ENCODE measurements at regions of chr19 and their contacts with region 1.

Region 1: DNA sequence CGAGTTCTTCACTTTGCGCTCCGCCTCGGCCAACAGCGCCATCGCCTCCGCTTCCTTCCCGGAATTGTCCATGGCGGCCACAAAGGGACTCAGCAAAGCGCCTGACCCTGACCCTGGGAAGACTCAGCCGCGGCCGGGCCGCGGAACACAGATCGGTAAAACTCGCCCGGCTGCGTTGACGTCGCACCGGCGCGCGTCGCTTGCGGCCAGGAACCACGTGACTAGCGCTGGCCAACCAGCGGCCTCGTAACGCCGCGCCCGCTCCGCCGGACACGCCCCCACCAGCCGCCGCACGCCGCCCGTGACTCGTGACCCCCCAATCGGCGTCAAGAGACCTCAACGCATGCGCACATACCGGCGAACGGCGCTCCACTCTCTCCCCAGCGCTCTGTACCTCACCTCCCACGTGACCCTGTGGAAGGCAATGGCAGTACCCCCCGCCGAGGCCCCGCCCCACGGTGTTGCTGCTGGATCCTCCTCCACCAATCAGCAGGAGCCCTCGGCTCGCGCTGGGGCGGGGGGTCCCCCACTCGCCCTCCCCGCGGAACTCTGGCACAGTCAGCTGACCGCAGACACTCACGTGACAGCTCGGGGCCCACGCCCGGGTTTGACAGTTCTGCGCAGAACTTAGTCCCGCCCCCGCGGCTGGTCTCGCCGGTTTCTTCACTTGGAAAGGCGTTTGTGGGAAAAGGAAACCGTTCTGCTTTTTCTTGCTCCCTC is at the start of gene NAPA:
- DNase-seq: peak; percentile 100
- ATAC-seq: peak; percentile 92
- H3K4me3 ChIP-seq: peak within 1 kb of the TSS; percentile 97
- H3K4me3 Mint-ChIP-seq: peak within 1 kb of the TSS; percentile 99
- H3K27ac ChIP-seq: peak within 1 kb of the TSS; percentile 93 to 98
- H3K27ac Mint-ChIP-seq: peak within 1 kb of the TSS; percentile 96
- H3K4me1 ChIP-seq: peaks cover 77% of the 10 kb centered on the region
- H3K4me1 Mint-ChIP-seq: peaks cover 88% of the 10 kb centered on the region
- H3K27me3 ChIP-seq: no peaks in the 10 kb centered on the region
- H3K27me3 Mint-ChIP-seq: no peaks in the 10 kb centered on the region
- CTCF ChIP-seq: no peak
- total RNA-seq, gene NAPA: 135 to 145 TPM

Region 2: GRCh38 chr19:47447470-47448359 is 67.3 kb before region 1 on chr19:
- CTCF ChIA-PET with region 1: interaction called, 13 read pairs
- POLR2A ChIA-PET with region 1: no interaction called
- intact Hi-C with region 1: loop called in 1 of 2 experiments (anchors 2 kb)
- DNase-seq: peak in 12 of 14 experiments; percentile 23 to 81 (median 53)
- ATAC-seq: peak; percentile 64
- H3K4me3 ChIP-seq: peak overlapping the region; percentile 10
- H3K4me3 Mint-ChIP-seq: peak overlapping the region; percentile 79
- H3K27ac ChIP-seq: no peak overlapping the region
- H3K27ac Mint-ChIP-seq: no peak overlapping the region
- H3K4me1 ChIP-seq: peaks cover 51% of the 10 kb centered on the region
- H3K4me1 Mint-ChIP-seq: peaks cover 53% of the 10 kb centered on the region
- H3K27me3 ChIP-seq: peaks cover 23 to 31% of the 10 kb centered on the region in 2 experiments
- H3K27me3 Mint-ChIP-seq: peaks cover 71% of the 10 kb centered on the region
- CTCF ChIP-seq: no peak

Region 3: DNA sequence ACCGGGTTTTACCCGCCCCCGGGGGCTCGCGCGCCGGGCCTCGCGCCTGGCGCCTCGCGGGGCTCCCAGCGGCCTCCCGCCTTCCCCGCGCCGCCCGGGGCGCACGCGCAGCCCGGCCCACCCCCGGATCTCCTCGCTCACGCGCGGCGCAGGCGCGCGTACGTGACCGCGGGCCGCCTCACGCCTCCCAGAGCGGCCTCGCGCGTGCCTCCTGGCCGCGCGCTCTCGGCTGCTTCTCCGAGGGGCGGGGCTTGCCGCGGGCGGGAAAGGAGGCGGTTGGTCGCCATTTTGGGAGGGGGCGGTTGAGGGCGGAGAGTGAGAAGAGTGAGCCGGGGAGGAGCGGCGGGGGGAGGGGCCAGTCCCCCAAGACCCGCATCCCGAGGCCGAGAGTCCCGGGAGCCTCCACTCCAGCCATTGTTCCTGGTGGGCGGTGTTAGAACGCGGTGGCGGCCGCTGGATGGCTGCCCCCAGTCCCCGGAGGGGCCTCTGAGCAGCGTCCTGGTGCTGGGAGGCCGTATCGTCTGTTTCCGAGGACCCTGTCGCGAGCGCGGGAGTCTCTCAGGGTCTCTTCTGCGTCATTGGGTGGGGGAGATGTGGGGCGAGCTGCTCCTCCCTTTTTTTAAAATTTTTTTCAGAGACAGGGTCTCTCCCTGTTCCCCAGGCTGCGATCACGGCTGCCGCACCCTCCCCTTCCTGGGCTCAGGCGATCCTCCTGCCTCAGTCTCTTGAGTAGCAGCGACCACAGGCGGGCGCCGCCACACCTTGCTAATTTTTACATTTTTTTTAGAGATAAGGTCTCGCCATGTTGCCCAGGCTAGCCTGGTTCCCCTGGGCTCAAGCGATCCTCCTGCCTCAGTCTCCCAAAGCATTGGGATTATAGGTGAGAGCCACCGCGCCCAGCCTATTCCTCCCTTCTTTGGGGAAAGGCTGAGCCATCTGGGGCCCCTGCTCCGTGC is 58.3 kb after region 1 on chr19 and contains the start of gene ZNF541:
- CTCF ChIA-PET with region 1: interaction called, 4 read pairs
- POLR2A ChIA-PET with region 1: interaction called, 5 read pairs
- intact Hi-C with region 1: loop called (anchors 1 to 2 kb)
- DNase-seq: peak; percentile 80 to 96 (median 88)
- ATAC-seq: peak; percentile 88
- H3K4me3 ChIP-seq: peak within 1 kb of the TSS; percentile 63
- H3K4me3 Mint-ChIP-seq: peak within 1 kb of the TSS; percentile 76
- H3K27ac ChIP-seq: peak within 1 kb of the TSS in 1 of 2 donors; percentile 34
- H3K27ac Mint-ChIP-seq: peak within 1 kb of the TSS; percentile 15
- H3K4me1 ChIP-seq: peaks cover 48% of the 10 kb centered on the region
- H3K4me1 Mint-ChIP-seq: peaks cover 42% of the 10 kb centered on the region
- H3K27me3 ChIP-seq: no peaks in the 10 kb centered on the region
- H3K27me3 Mint-ChIP-seq: no peaks in the 10 kb centered on the region
- CTCF ChIP-seq: no peak
- total RNA-seq, gene ZNF541: 0.81 to 0.88 TPM

Region 4: GRCh38 chr19:47600246-47601179 is 85.5 kb after region 1 on chr19:
- CTCF ChIA-PET with region 1: interaction called, 21 read pairs
- POLR2A ChIA-PET with region 1: interaction called, 35 read pairs
- intact Hi-C with region 1: loop called (anchors 2 kb)
- DNase-seq: peak; percentile 98 to 100 (median 100)
- ATAC-seq: peak; percentile 97
- H3K4me3 ChIP-seq: peak overlapping the region; percentile 80
- H3K4me3 Mint-ChIP-seq: peak overlapping the region; percentile 86
- H3K27ac ChIP-seq: peak overlapping the region; percentile 55 to 79
- H3K27ac Mint-ChIP-seq: peak overlapping the region; percentile 89
- H3K4me1 ChIP-seq: peaks cover 24% of the 10 kb centered on the region
- H3K4me1 Mint-ChIP-seq: peaks cover 20% of the 10 kb centered on the region
- H3K27me3 ChIP-seq: no peaks in the 10 kb centered on the region
- H3K27me3 Mint-ChIP-seq: no peaks in the 10 kb centered on the region
- CTCF ChIP-seq: no peak

Region 5: GRCh38 chr19:47697863-47698609 is 183.0 kb after region 1 on chr19:
- CTCF ChIA-PET with region 1: interaction called, 4 read pairs
- POLR2A ChIA-PET with region 1: interaction called, 5 read pairs
- intact Hi-C with region 1: loop called (anchors 2 to 5 kb)
- DNase-seq: peak; percentile 16 to 75 (median 42)
- ATAC-seq: peak; percentile 77
- H3K4me3 ChIP-seq: no peak overlapping the region
- H3K4me3 Mint-ChIP-seq: no peak overlapping the region
- H3K27ac ChIP-seq: no peak overlapping the region
- H3K27ac Mint-ChIP-seq: no peak overlapping the region
- H3K4me1 ChIP-seq: peaks cover 6% of the 10 kb centered on the region
- H3K4me1 Mint-ChIP-seq: peaks cover 4% of the 10 kb centered on the region
- H3K27me3 ChIP-seq: no peaks in the 10 kb centered on the region
- H3K27me3 Mint-ChIP-seq: no peaks in the 10 kb centered on the region
- CTCF ChIP-seq: peak; percentile 86